Activated CD4-positive, alpha-beta memory T cell treated with anti-CD3 and anti-CD28 coated beads for 36 hours (primary cell): ENCODE measurements at regions of chr11 and their contacts with region 1.

Region 1: GRCh38 chr11:127943763-127944162 is 643.6 kb downstream of the ETS1 start:
- DNase-seq: peak; percentile 43
- H3K4me3 Mint-ChIP-seq: no peak overlapping the region
- H3K27ac Mint-ChIP-seq: no peak overlapping the region
- H3K4me1 Mint-ChIP-seq: peaks cover 13% of the 10 kb centered on the region
- H3K27me3 Mint-ChIP-seq: peaks cover 19% of the 10 kb centered on the region

Region 2: GRCh38 chr11:127825183-127825582 is 118.6 kb before region 1 on chr11:
- CTCF ChIA-PET with region 1: no interaction called
- POLR2A ChIA-PET with region 1: no interaction called
- intact Hi-C with region 1: no loop called
- DNase-seq: no peak
- H3K4me3 Mint-ChIP-seq: no peak overlapping the region
- H3K27ac Mint-ChIP-seq: no peak overlapping the region
- H3K4me1 Mint-ChIP-seq: no peaks in the 10 kb centered on the region
- H3K27me3 Mint-ChIP-seq: peaks cover 13% of the 10 kb centered on the region

Region 3: DNA sequence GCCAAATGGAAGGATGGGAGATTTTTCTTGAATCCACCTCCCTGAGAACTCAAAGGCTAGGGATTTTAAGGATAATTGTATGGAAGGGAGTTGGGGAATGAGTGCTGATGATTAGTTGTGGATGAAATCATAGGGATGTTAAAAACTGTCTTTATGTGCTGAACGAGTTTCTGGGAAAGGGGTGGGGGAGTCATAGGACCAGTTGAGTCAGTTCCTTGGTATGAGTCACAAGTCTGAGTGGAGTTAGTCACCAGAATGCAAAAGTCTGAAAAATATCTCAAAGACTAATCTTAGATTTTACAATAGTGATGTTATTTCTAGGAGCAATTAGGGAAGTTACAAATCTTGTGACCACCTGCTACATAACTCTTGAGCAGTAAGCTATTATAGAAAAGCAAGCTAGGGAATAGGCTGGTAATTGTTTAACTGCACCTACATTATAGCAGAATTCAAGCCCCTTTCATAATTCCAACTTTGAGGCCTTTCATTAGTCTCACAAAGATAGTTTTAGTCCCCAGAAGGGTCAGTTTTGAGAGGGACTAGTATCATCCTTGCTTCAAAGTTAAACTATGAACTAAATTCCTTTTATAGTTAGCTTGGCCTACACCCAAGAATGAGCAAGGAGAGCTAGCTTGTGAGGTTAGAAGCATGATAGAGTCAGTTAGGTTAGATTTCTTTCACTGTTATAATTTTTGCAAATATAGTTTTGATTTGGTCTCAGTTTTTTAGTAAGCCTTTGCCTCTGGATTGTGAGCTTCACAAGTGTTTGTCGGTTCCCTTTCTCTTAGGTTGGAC is 24.4 kb before region 1 on chr11:
- CTCF ChIA-PET with region 1: no interaction called
- POLR2A ChIA-PET with region 1: no interaction called
- intact Hi-C with region 1: loop called (anchors 1 kb)
- DNase-seq: peak; percentile 39
- H3K4me3 Mint-ChIP-seq: no peak overlapping the region
- H3K27ac Mint-ChIP-seq: no peak overlapping the region
- H3K4me1 Mint-ChIP-seq: peaks cover 6% of the 10 kb centered on the region
- H3K27me3 Mint-ChIP-seq: peaks cover 18% of the 10 kb centered on the region

Region 4: GRCh38 chr11:128021349-128022006 is 77.7 kb after region 1 on chr11:
- CTCF ChIA-PET with region 1: no interaction called
- POLR2A ChIA-PET with region 1: no interaction called
- intact Hi-C with region 1: loop called (anchors 1 kb)
- DNase-seq: no peak
- H3K4me3 Mint-ChIP-seq: no peak overlapping the region
- H3K27ac Mint-ChIP-seq: no peak overlapping the region
- H3K4me1 Mint-ChIP-seq: peaks cover 7% of the 10 kb centered on the region
- H3K27me3 Mint-ChIP-seq: no peaks in the 10 kb centered on the region